Astrocyte of the cerebellum (primary cell): ENCODE measurements at regions of chr3 and their contacts with region 1.

Region 1: GRCh38 chr3:73419179-73419803 is 205.4 kb downstream of the PDZRN3 start:
- DNase-seq: no peak
- H3K4me3 ChIP-seq: no peak overlapping the region
- CTCF ChIP-seq: peak; percentile 18

Region 2: GRCh38 chr3:73465926-73466325 is 46.6 kb after region 1 on chr3:
- in situ Hi-C with region 1: loop called (anchors 5 kb)
- DNase-seq: no peak
- H3K4me3 ChIP-seq: no peak overlapping the region
- CTCF ChIP-seq: no peak